WTC11 (cell line): ENCODE measurements at regions of chr2 and their contacts with region 1.

Region 1: DNA sequence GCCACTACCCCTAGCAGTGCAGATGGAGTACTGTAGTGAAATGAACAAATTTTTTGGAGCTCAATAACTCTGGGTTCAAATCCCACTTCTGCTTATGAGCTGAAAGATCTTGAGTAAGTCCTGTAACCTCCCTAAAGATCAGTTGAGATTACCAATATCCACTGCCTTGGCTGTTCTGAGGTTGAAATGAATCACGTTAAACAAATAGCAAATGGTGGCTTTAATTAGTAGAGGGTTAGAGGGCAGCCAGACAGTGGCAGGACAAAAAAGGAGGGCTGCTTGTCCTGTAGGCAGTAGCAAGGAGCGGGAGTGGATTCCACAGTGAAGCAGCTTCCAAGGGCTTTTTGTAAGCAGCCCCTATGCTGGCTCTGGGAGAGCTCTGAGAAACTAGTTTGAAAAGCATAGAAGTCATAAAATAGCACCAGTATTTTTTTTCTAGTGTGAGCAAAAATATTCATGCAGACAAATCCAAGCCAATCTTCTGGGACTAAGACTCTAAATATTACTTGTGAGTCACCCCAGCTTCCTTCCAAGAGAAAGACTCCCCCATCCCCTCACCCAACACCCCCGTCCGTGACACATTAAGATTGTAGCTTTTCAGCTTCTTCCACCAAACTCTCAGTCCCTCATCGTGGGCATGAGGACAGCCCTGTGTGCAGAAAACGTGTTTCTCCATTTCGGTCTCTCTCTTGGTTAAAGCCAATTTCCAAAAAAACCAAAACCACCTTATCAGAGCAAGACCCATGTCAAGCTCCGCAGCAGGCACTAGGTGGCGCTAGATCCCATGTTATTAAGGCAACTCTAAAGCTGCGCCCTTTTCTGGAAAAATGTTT is 123.5 kb upstream of the LGALSL start:
- DNase-seq: peak; percentile 84
- ATAC-seq: peak; percentile 77
- H3K4me3 Mint-ChIP-seq: peak overlapping the region; percentile 46
- H3K27ac Mint-ChIP-seq: peak overlapping the region; percentile 86
- H3K4me1 Mint-ChIP-seq: peaks cover 61% of the 10 kb centered on the region
- H3K27me3 Mint-ChIP-seq: no peaks in the 10 kb centered on the region; the same call in 1 of the 2 replicates
- CTCF ChIP-seq: peak; percentile 83

Region 2: GRCh38 chr2:64277101-64277849 is 53.2 kb before region 1 on chr2:
- CTCF ChIA-PET with region 1: interaction called, 18 read pairs
- POLR2A ChIA-PET with region 1: no interaction called
- DNase-seq: peak; percentile 47
- ATAC-seq: peak; percentile 50
- H3K4me3 Mint-ChIP-seq: peak overlapping the region; percentile 14; the same call in 1 of the 2 replicates
- H3K27ac Mint-ChIP-seq: peak overlapping the region; percentile 94
- H3K4me1 Mint-ChIP-seq: peaks cover 72% of the 10 kb centered on the region
- H3K27me3 Mint-ChIP-seq: peaks cover 11% of the 10 kb centered on the region
- CTCF ChIP-seq: no peak

Region 3: GRCh38 chr2:64359892-64360657 is 29.6 kb after region 1 on chr2:
- CTCF ChIA-PET with region 1: interaction called, 30 read pairs
- POLR2A ChIA-PET with region 1: interaction called, 3 read pairs
- DNase-seq: peak; percentile 22
- ATAC-seq: peak; percentile 57
- H3K4me3 Mint-ChIP-seq: no peak overlapping the region
- H3K27ac Mint-ChIP-seq: no peak overlapping the region
- H3K4me1 Mint-ChIP-seq: peaks cover 35% of the 10 kb centered on the region
- H3K27me3 Mint-ChIP-seq: no peaks in the 10 kb centered on the region; the same call in none of the 2 replicates
- CTCF ChIP-seq: no peak

Region 4: GRCh38 chr2:64383016-64383591 is 52.6 kb after region 1 on chr2:
- CTCF ChIA-PET with region 1: no interaction called
- POLR2A ChIA-PET with region 1: no interaction called
- DNase-seq: no peak
- ATAC-seq: no peak
- H3K4me3 Mint-ChIP-seq: no peak overlapping the region
- H3K27ac Mint-ChIP-seq: no peak overlapping the region
- H3K4me1 Mint-ChIP-seq: peaks cover 8% of the 10 kb centered on the region
- H3K27me3 Mint-ChIP-seq: no peaks in the 10 kb centered on the region
- CTCF ChIP-seq: no peak

Region 5: GRCh38 chr2:64482765-64483504 is 152.4 kb after region 1 on chr2:
- CTCF ChIA-PET with region 1: interaction called, 188 read pairs
- POLR2A ChIA-PET with region 1: interaction called, 7 read pairs
- DNase-seq: no peak
- ATAC-seq: peak; percentile 42; the same call in 1 of the 2 replicates
- H3K4me3 Mint-ChIP-seq: no peak overlapping the region
- H3K27ac Mint-ChIP-seq: no peak overlapping the region
- H3K4me1 Mint-ChIP-seq: peaks cover 7% of the 10 kb centered on the region; the same call in 1 of the 2 replicates
- H3K27me3 Mint-ChIP-seq: no peaks in the 10 kb centered on the region
- CTCF ChIP-seq: no peak

Region 6: GRCh38 chr2:64523666-64524603 is 193.4 kb after region 1 on chr2 and contains the start of gene AFTPH:
- CTCF ChIA-PET with region 1: interaction called, 28 read pairs
- POLR2A ChIA-PET with region 1: interaction called, 8 read pairs
- DNase-seq: peak; percentile 98
- ATAC-seq: peak; percentile 95
- H3K4me3 Mint-ChIP-seq: peak within 1 kb of the TSS; percentile 100
- H3K27ac Mint-ChIP-seq: peak within 1 kb of the TSS; percentile 98
- H3K4me1 Mint-ChIP-seq: peaks cover 18% of the 10 kb centered on the region
- H3K27me3 Mint-ChIP-seq: no peaks in the 10 kb centered on the region
- CTCF ChIP-seq: no peak
- total RNA-seq, gene AFTPH: 14.9 to 16.3 TPM (median 15.0 TPM) in 3 replicates

Region 7: GRCh38 chr2:64595397-64596160 is 265.1 kb after region 1 on chr2:
- CTCF ChIA-PET with region 1: interaction called, 16 read pairs
- POLR2A ChIA-PET with region 1: no interaction called
- DNase-seq: no peak
- ATAC-seq: peak; percentile 74
- H3K4me3 Mint-ChIP-seq: no peak overlapping the region
- H3K27ac Mint-ChIP-seq: no peak overlapping the region
- H3K4me1 Mint-ChIP-seq: no peaks in the 10 kb centered on the region
- H3K27me3 Mint-ChIP-seq: no peaks in the 10 kb centered on the region
- CTCF ChIP-seq: no peak